Activated CD4-positive, alpha-beta T cell treated with anti-CD3 and anti-CD28 coated beads, Interleukin-2, amount 10 ng/mL, durations not matched to agents 24 days and 14 days (primary cell): ENCODE measurements at regions of chr5 and their contacts with region 1.

Region 1: DNA sequence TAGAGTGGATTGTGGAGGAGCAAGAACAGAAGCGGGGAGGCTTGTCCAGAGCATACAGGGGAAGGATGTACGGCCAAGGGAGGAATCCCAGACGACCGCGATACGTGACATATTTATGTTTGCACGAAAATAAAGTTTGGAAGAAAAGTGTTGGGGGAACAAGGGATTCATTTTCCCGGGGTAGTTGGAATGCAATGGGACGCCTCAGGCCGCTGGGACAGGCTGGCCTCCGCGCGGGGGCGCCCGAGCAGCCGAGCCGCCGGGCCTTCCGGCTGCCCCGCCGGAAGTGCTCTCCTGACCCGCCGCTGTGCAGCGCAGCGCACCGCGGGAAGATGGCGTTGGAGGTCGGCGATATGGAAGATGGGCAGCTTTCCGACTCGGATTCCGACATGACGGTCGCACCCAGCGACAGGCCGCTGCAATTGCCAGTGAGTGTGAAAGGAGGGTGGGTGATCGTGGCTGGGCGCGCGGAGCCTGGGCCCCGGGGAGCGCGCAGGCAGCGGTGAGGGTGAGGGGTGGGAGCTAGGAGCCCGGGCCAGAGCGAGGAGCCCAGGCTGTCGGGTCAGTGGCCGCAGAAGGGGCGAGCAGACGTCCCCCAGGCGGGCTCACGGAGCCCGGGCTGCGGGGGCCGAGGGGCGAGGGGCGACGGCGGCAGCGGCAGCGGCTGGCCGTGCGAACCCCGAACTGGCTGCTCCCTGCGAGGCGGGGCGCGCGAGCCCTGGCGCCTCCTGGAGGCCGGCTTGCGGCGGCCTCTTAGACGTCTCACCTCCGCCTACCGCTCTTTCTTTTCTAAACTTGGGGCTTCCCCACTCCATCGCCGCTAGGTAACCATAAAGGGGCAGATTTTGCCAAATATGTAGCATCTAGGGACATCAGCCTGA is at the start of gene PHAX:
- DNase-seq: peak; percentile 94
- H3K4me3 Mint-ChIP-seq: peak within 1 kb of the TSS; percentile 96
- H3K27ac Mint-ChIP-seq: peak within 1 kb of the TSS; percentile 98
- H3K4me1 Mint-ChIP-seq: peaks cover 24% of the 10 kb centered on the region
- H3K27me3 Mint-ChIP-seq: peaks cover 11% of the 10 kb centered on the region
- total RNA-seq, gene PHAX: 50.2 and 51.7 TPM in 2 replicates

Region 2: GRCh38 chr5:126339215-126339805 is 261.6 kb before region 1 on chr5:
- intact Hi-C with region 1: loop called (anchors 1 kb)
- DNase-seq: peak; percentile 86
- H3K4me3 Mint-ChIP-seq: no peak overlapping the region
- H3K27ac Mint-ChIP-seq: no peak overlapping the region
- H3K4me1 Mint-ChIP-seq: no peaks in the 10 kb centered on the region
- H3K27me3 Mint-ChIP-seq: peaks cover 16% of the 10 kb centered on the region

Region 3: DNA sequence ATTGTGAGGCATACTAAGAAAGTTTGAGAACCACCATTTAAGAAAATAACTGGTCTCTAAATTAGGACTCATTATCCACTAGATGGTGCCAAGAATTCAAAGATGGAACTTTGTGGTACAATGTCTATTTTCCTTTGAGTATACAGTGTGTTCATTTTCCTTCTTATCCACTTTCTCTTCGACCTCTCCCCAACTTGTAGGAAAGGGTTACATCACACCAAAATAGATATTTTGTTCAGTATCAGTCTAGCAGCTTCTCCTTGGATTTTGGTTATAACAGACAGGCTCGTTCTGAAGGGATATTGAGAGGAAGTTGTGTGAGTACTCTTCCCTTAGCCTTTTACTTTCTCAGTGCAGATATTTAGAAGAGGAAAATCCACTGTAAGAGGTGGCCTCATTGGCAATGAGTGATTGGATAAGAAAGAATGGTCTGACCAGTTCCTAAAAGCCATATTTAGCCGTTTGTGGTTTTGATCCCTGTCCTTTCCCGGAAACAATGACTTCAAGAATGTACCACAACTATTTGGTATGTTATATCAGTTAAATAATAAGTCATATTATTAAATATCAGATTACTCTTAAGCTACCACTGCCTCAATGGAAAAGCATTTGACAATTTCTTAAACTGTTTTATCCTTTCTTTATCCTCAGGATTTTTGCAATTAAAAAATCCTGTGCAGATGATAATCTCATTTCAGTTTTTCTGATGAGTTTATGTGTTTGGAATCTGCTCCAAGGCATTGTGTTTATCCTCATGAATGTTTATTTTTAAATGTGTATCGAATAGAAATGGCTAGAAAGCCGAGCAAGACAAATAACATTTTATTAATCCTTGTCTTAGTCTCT is 246.6 kb before region 1 on chr5:
- intact Hi-C with region 1: loop called (anchors 2 kb)
- DNase-seq: no peak
- H3K4me3 Mint-ChIP-seq: no peak overlapping the region
- H3K27ac Mint-ChIP-seq: no peak overlapping the region
- H3K4me1 Mint-ChIP-seq: peaks cover 7% of the 10 kb centered on the region
- H3K27me3 Mint-ChIP-seq: peaks cover 3% of the 10 kb centered on the region

Region 4: GRCh38 chr5:126449751-126450271 is 151.1 kb before region 1 on chr5:
- intact Hi-C with region 1: loop called (anchors 1 kb)
- DNase-seq: peak; percentile 88
- H3K4me3 Mint-ChIP-seq: peak overlapping the region; percentile 91
- H3K27ac Mint-ChIP-seq: peak overlapping the region; percentile 100
- H3K4me1 Mint-ChIP-seq: peaks cover 57% of the 10 kb centered on the region
- H3K27me3 Mint-ChIP-seq: no peaks in the 10 kb centered on the region

Region 5: GRCh38 chr5:126884269-126884819 is 283.5 kb after region 1 on chr5:
- intact Hi-C with region 1: no loop called
- DNase-seq: no peak
- H3K4me3 Mint-ChIP-seq: no peak overlapping the region
- H3K27ac Mint-ChIP-seq: no peak overlapping the region
- H3K4me1 Mint-ChIP-seq: no peaks in the 10 kb centered on the region
- H3K27me3 Mint-ChIP-seq: no peaks in the 10 kb centered on the region

Region 6: DNA sequence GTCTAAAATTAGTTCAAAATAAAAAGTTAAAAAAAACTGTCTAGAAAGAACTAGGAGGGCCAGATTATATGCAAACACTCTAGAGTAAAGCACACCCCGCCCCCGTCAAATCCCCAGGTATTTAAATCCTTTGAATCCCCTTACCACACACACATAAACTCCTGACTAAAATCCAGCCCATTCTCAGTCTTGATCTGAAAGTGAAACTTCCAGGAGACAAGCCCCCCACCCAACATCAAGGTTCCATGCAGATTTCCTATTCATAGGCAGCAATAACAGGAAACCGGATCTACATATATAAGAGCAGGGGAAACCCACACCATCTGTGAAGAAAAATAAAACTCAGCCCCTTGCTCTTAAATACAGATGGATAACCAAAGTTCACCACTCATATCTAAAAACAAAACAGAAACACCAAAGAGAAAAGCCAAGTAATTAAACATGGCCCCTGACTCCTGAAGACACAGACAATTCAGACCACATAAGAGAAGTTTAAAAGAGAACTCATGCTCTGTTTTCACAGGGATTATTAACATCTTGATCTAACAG is 387.2 kb after region 1 on chr5:
- intact Hi-C with region 1: loop called (anchors 2 kb)
- DNase-seq: peak; percentile 80
- H3K4me3 Mint-ChIP-seq: peak overlapping the region; percentile 60
- H3K27ac Mint-ChIP-seq: peak overlapping the region; percentile 87
- H3K4me1 Mint-ChIP-seq: peaks cover 19% of the 10 kb centered on the region
- H3K27me3 Mint-ChIP-seq: no peaks in the 10 kb centered on the region

Region 7: GRCh38 chr5:127517480-127518318 is 916.8 kb after region 1 on chr5 and contains the start of gene PRRC1:
- intact Hi-C with region 1: loop called (anchors 5 kb)
- DNase-seq: peak; percentile 94
- H3K4me3 Mint-ChIP-seq: peak within 1 kb of the TSS; percentile 86
- H3K27ac Mint-ChIP-seq: peak within 1 kb of the TSS; percentile 84
- H3K4me1 Mint-ChIP-seq: peaks cover 25% of the 10 kb centered on the region
- H3K27me3 Mint-ChIP-seq: peaks cover 13% of the 10 kb centered on the region
- total RNA-seq, gene PRRC1: 50.4 and 52.3 TPM in 2 replicates